CD4-positive, alpha-beta memory T cell (primary cell): ENCODE measurements at regions of chr11 and their contacts with region 1.

Region 1: GRCh38 chr11:65546217-65546958 is 11.8 kb downstream of the LTBP3 start:
- DNase-seq: peak; percentile 96 to 99 (median 97)
- H3K4me3 ChIP-seq: peak overlapping the region in 1 of 2 donors; percentile 41
- H3K4me3 Mint-ChIP-seq: peak overlapping the region; percentile 79 to 92 (median 80)
- H3K27ac ChIP-seq: peak overlapping the region; percentile 59
- H3K27ac Mint-ChIP-seq: peak overlapping the region; percentile 81 to 97 (median 94)
- H3K4me1 ChIP-seq: peaks cover 46% of the 10 kb centered on the region
- H3K4me1 Mint-ChIP-seq: peaks cover 31 to 65% (median 43%) of the 10 kb centered on the region in 4 donors
- H3K27me3 ChIP-seq: no peaks in the 10 kb centered on the region
- H3K27me3 Mint-ChIP-seq: no peaks in the 10 kb centered on the region

Region 2: DNA sequence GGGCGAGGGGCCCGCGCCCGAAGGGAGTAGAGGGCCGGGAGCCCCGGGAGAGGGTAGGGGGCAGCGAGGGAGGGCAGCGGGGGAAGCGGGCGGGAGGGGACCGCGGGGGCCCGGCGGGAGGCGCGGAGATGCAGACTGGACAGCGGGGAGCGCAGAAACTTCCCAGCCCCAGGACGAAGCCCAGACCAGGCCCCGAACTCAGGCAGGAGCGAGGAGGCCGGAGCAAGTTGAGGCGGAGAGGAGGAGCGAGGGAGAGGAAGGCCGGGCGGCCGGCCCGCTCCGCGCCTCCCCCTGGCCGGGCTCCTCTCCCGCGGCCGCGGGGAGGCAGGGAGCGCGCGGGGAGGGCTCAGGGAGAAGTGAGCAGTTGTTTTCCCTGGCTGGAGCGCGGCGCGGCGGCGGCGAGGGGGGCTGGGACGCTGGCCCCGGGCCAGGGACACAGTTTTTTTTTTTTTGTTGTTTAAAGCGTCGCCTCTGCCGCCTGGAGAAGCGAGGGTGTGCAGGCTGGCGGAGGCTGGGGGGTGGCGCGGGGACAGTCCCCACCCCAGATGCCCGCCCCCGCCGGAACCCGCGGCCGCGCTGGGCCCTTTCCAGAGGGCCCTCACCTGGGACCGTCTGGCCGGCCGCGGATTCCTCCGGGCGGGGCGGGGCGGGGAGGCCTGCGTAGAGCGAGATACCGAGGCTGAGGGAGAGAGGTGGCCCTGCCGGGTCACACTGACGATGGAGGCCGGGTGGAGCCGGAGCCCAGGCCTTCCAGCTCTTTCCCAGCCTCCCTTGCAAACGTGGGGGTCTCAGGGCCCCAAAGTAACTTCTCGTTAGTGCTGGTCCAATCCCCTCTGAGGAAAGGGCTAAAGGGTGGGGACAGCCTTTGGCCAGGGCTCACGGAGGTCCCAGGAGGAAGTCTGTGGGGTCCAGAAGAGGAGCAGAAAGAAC is 11.9 kb after region 1 on chr11 and contains the start of gene LTBP3:
- CTCF ChIA-PET with region 1: interaction called, 71 read pairs
- POLR2A ChIA-PET with region 1: interaction called, 403 read pairs
- intact Hi-C with region 1: no loop called
- DNase-seq: peak in 3 of 5 donors; percentile 42 to 54 (median 44)
- H3K4me3 ChIP-seq: peak within 1 kb of the TSS; percentile 52
- H3K4me3 Mint-ChIP-seq: peak within 1 kb of the TSS; percentile 87 to 94 (median 91)
- H3K27ac ChIP-seq: peak within 1 kb of the TSS; percentile 70
- H3K27ac Mint-ChIP-seq: peak within 1 kb of the TSS; percentile 85 to 97 (median 93)
- H3K4me1 ChIP-seq: peaks cover 65% of the 10 kb centered on the region
- H3K4me1 Mint-ChIP-seq: peaks cover 39 to 66% (median 53%) of the 10 kb centered on the region in 4 donors
- H3K27me3 ChIP-seq: no peaks in the 10 kb centered on the region
- H3K27me3 Mint-ChIP-seq: no peaks in the 10 kb centered on the region
- total RNA-seq, gene LTBP3: 201 to 211 TPM